ENCODE measurements at regions of chr19 and their contacts with region 1.

Region 1: DNA sequence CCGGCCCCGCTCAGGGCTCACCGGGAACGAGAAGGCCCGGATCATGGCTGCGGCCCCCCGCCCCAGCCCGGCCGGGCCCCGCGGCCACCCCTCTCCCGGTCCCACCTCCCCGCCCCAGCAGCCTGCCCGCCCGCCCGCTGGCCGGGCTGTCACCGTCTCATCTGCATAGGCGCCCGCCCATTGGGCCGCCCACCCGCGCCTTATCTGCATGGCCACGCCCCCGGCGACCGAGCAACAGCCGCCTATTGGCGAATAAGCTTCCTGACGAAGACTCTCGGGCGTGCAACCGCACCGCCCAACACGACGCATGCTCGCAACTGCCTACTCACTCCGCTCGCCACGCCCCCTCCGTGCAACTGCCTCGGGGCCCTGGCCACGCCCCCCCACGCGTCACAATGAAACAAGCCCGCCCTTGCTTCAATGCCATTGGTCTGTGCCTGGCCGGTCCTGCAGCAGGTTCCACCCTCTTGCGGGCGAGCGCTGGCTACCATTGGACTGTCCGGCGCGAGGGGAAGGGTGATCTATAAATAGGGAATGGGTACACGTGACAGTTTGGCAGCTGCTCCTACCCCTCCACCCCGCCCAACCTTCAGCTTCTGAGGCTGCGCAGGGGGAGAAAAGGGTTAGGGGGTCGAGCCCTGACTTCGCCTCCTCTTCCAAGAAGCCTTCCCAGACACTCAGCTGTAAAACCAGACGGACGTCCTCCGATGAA is at the start of gene DACT3:
- DNase-seq: peak; percentile 100
- H3K4me3 ChIP-seq: peak within 1 kb of the TSS; percentile 29 to 57 (median 33)
- H3K27ac ChIP-seq: peak within 1 kb of the TSS; percentile 34
- H3K4me1 ChIP-seq: peaks cover 14% of the 10 kb centered on the region
- H3K27me3 ChIP-seq: peaks cover 13 to 22% of the 10 kb centered on the region in 2 experiments
- CTCF ChIP-seq: no peak
- POLR2A ChIP-seq: no peak
- total RNA-seq, gene DACT3: 0.22 and 0.65 TPM in 2 replicates

Region 2: GRCh38 chr19:46537136-46538097 is 123.8 kb before region 1 on chr19:
- CTCF ChIA-PET with region 1: interaction called, 11 read pairs
- POLR2A ChIA-PET with region 1: no interaction called
- dilution Hi-C with region 1: no loop called
- intact Hi-C with region 1: loop called (anchors 2 kb)
- DNase-seq: peak; percentile 41
- H3K4me3 ChIP-seq: no peak overlapping the region
- H3K27ac ChIP-seq: no peak overlapping the region
- H3K4me1 ChIP-seq: no peaks in the 10 kb centered on the region
- H3K27me3 ChIP-seq: peaks cover 0 to 1% of the 10 kb centered on the region in 2 experiments
- CTCF ChIP-seq: peak; percentile 89 to 93
- POLR2A ChIP-seq: no peak

Region 3: GRCh38 chr19:46607448-46607841 is 53.7 kb before region 1 on chr19:
- CTCF ChIA-PET with region 1: interaction called, 422 read pairs
- POLR2A ChIA-PET with region 1: interaction called, 3 read pairs
- dilution Hi-C with region 1: no loop called
- intact Hi-C with region 1: loop called (anchors 1 kb)
- DNase-seq: no peak
- H3K4me3 ChIP-seq: no peak overlapping the region
- H3K27ac ChIP-seq: no peak overlapping the region
- H3K4me1 ChIP-seq: peaks cover 13% of the 10 kb centered on the region
- H3K27me3 ChIP-seq: no peaks in the 10 kb centered on the region
- CTCF ChIP-seq: no peak
- POLR2A ChIP-seq: no peak

Region 4: GRCh38 chr19:46624958-46625661 is 36.1 kb before region 1 on chr19 and contains the start of gene PTGIR:
- CTCF ChIA-PET with region 1: interaction called, 422 read pairs
- POLR2A ChIA-PET with region 1: interaction called, 8 read pairs
- dilution Hi-C with region 1: no loop called
- intact Hi-C with region 1: no loop called
- DNase-seq: peak; percentile 42
- H3K4me3 ChIP-seq: no peak within 1 kb of the TSS
- H3K27ac ChIP-seq: no peak within 1 kb of the TSS
- H3K4me1 ChIP-seq: peaks cover 12% of the 10 kb centered on the region
- H3K27me3 ChIP-seq: no peaks in the 10 kb centered on the region
- CTCF ChIP-seq: no peak
- POLR2A ChIP-seq: no peak
- total RNA-seq, gene PTGIR: 0.55 and 1.1 TPM in 2 replicates

Region 5: DNA sequence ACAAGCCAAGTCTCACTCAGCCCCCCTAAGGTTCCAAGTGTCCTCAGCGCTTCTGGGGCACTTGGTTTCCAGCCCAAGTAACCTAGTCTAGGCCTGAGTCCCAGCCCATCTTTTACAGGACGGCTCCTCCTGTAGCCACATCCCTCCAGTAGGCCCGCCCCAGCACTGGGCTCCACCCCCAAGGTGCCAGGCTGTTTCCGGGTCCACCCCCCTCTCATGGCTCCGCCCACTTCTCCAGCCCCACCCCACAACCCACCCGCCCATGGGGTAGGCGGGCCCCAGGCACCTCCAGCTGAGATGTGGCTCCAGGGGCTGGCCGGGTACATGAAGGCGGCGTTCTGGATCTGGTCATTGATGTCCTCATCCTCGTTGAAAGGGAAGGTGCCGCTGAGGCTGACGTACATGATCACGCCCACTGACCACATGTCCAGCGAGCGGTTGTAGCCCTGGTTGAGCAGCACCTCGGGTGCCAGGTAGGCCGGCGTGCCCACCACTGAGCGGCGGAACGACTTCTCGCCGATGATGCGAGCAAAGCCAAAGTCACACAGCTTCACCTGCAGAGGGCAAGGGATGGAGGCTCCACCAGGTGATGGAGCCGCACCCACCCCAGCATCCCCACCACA is 17.0 kb after region 1 on chr19:
- CTCF ChIA-PET with region 1: interaction called, 15 read pairs
- POLR2A ChIA-PET with region 1: no interaction called
- dilution Hi-C with region 1: no loop called
- intact Hi-C with region 1: no loop called
- DNase-seq: peak; percentile 13
- H3K4me3 ChIP-seq: no peak overlapping the region
- H3K27ac ChIP-seq: no peak overlapping the region
- H3K4me1 ChIP-seq: no peaks in the 10 kb centered on the region
- H3K27me3 ChIP-seq: no peaks in the 10 kb centered on the region
- CTCF ChIP-seq: no peak
- POLR2A ChIP-seq: no peak

Region 6: DNA sequence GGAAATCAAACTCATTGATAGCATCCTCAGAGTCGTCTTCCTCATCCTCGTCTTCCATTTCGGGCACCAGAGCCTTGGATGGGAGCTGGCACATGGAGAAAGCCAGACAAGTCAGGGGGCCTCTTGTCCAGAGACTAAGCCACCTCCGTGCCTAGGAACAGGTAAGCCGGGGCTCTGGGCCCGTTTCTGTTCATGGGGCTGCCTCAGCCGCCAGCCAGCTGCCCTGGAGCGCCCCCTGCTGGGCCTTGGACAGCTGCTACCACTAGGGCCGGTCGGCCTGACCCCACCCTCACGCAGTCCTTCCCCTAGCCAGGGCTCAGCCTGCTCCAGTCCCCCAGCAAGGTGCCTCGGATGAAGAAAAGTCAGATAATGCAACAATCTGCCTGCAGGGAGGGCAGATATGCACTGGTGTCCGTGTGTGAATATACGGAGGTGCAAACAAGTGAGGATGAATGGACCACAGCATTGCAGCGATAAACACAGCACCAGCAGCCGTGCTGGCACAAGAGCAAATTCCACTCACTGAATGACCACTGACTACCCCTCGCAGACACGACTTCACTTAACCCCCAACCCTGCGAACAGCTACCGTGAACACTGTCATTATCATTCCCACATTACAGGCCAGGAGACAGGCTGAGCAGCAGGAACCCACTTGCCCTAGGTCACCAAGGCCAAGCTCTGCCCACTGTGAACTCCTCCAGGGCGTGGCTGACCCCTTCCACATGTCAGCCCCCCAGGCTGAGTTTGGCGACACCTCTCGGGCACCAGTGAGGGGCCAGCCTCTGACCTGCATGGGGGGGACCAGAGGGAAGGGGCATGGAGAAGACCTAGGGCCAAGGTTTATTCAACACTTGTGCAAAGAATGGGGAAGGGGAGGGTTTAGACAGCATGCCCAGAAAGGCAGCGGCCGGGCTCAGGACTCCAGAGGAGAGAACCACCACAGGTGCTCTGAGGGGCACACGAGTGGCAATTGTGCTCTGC is 67.8 kb after region 1 on chr19:
- CTCF ChIA-PET with region 1: interaction called, 20 read pairs
- POLR2A ChIA-PET with region 1: no interaction called
- dilution Hi-C with region 1: no loop called
- intact Hi-C with region 1: loop called (anchors 1 kb)
- DNase-seq: peak; percentile 88
- H3K4me3 ChIP-seq: peak overlapping the region in 1 of 3 experiments; percentile 6
- H3K27ac ChIP-seq: peak overlapping the region; percentile 67
- H3K4me1 ChIP-seq: peaks cover 63% of the 10 kb centered on the region
- H3K27me3 ChIP-seq: no peaks in the 10 kb centered on the region
- CTCF ChIP-seq: peak; percentile 98 to 99
- POLR2A ChIP-seq: no peak

Region 7: DNA sequence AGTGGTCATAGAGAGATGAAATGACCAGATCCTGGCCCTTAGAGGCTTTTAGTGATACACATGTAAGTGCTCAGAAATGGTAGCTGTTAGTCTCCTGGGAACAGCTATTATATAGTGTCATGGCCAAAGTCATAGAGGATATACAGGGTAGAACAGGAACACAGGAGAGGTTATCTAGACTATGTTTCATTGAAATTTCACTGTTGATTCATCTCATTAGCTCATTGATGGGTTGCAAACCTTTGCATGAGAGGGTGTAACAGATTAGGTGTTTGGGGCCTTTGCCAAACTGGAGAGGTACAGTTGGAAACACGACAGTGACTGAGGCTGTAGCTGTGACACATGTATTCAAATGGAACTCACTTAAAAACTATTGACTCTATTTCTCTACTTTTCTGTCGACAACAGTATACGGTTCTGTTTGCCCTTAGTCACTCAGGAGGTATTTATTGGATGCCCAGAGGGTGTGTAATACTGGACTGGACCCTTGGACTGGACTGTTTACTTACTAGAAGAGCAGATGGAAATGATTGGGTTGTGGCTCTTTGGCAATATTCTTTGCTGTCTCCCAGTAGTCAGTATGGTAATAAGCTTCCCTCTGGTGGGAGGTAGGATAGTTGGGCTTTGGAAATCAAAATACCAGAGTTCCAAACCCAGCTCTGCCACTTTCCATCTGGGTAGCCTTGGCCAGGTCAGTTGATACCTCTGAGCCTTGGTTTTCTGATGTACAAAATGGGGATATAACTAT is 229.4 kb after region 1 on chr19:
- CTCF ChIA-PET with region 1: no interaction called
- POLR2A ChIA-PET with region 1: no interaction called
- dilution Hi-C with region 1: no loop called
- intact Hi-C with region 1: no loop called
- DNase-seq: no peak
- H3K4me3 ChIP-seq: no peak overlapping the region
- H3K27ac ChIP-seq: no peak overlapping the region
- H3K4me1 ChIP-seq: no peaks in the 10 kb centered on the region
- H3K27me3 ChIP-seq: no peaks in the 10 kb centered on the region
- CTCF ChIP-seq: no peak
- POLR2A ChIP-seq: no peak